ENCODE measurements at regions of chr4 and their contacts with region 1.

Region 1: GRCh38 chr4:15956179-15956850 is 6.7 kb downstream of the FGFBP2 start:
- DNase-seq: peak; percentile 82
- ATAC-seq: peak; percentile 91 to 94

Region 2: DNA sequence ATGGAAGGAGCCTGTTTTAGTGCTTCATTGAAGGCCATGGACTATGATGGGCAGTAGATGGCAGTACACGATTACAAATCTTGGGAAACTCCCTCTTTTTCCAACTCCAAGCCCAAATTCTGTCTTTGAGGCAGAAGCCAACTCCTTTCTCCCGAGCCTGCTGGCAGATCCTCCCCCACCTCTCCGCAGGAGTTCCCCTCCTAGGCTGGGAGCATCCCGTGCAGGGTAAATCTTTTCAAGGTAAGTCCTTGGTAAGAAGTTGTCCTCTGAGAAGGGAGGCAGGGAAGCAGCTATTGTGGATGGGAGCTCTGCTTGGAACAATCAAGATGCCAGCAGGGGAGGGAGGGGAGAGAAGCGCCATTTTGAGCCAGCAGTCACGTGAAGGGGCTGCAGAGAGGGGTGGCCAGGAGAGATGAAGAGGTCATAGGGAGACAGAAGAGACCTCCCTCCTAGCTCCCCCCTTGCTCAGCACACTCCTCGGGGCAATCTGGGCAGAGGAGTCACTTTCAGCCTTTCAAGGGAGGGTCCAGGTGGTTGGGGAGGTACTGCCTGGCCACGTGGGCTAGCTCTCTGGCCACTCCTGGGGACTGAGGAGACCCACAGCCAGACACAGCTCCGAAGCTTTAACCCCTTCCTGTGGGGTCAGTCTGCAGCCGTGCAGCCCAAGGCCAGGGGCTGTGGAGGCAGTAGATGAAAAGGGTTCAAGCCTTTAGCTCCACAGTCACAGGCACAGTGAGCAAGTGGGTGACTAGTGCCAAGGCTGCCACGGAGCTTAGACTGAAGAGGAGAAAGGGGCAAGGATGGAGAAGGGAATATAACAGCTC is 477.0 kb before region 1 on chr4:
- intact Hi-C with region 1: loop called in 1 of 2 experiments (anchors 2 kb)
- DNase-seq: peak; percentile 31
- ATAC-seq: peak; percentile 90 to 91

Region 3: DNA sequence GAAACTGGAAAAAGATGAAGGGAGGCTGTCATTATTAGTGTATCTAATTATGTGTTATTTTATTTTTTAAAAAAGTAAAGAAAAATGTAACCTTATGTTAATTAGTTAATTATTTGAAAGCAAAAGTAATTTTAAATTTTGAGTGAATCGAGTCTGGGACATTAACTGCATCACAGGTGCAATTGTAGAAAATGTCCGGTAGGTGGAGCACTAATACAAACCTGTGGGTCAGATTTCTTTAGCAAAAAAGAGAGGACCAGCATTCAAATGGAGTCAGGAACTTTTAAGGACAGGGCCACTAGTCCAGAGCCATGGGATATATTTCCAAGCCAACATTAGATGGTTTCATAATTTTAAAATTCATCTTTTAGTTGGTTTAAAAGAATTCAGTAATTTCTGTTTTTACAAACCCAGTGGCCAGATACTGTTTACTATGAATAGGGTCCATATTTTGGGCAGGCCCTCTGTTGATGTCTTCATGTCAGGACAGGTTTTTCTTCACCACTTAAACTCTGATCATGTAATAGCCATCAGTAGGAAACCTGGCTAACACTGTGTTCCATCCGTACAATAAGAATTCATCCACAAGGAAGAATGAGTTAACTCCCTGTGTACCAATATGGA is 226.3 kb before region 1 on chr4:
- intact Hi-C with region 1: loop called in 1 of 2 experiments (anchors 5 kb)
- DNase-seq: no peak
- ATAC-seq: peak; percentile 21 to 44

Region 4: DNA sequence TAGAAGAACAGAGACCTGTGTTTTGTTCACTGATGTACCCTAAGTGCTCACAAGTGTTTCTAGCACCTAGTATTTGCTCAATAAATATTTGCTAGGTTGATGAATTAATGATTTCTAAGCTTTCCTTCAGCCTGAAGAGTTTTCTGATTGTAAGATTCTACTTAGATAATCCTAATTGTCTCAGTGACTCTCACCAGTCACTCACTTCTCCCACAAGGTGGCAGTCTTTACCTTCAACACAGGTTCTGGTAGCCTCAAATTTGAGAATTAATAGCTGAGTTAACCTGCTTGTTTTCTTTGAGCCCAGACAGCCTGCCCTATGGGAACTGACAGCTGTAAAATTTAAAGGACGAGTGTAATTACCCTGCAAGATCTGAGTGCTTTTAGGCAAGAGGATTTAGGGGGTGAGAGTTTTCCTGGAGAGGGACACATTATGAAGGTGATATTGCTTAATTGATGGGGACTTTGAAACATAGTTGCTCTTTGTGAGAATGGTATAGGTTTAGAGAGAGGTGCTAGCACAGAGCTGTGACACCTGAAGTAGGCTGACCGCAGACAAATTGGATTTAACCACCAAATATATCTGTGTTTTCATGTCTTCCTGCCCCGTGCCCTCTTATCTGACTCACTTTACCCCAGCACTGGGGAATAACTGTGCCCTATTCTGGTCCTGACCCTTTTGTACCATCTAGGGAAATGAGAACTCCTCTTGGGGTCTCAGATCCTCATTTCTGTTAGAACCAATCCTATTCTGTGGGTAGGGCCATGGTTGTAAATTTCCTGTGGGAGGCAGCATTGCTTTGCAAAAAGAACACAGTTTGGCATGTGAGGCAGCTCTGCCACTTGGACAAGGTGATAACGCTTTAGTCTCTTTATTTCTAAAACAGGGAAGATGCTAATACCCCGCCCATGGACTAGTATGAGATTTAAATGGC is 150.5 kb before region 1 on chr4:
- intact Hi-C with region 1: loop called (anchors 1 to 5 kb)
- DNase-seq: no peak
- ATAC-seq: peak; percentile 76 to 82

Region 5: GRCh38 chr4:15832523-15833451 is 123.5 kb before region 1 on chr4:
- intact Hi-C with region 1: no loop called
- DNase-seq: no peak
- ATAC-seq: no peak

Region 6: DNA sequence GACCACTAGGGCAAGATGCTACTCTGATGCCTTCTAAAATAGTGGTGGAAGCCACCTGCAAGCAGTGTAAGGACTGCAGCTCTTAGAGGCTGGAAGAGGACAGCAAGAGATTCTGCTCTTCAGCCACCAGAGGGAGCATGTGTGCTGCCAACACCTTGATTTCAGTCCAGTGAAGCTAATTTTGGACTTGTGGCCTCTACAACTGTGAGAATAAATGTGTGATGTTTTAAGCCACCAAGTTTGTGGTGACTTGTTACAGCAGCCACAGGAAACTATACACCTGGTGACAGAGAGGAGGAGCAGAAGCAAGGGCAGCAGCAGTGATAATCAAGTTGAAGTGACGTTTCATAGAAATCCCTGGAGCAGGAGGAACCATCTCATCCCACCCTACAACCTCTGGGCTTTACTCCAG is 73.6 kb before region 1 on chr4:
- intact Hi-C with region 1: loop called (anchors 5 kb)
- DNase-seq: peak; percentile 40
- ATAC-seq: peak; percentile 82 to 83

Measured in left cardiac atrium (tissue), 4 donors.